Mammary epithelial cell (primary cell): ENCODE measurements at regions of chr11 and their contacts with region 1.

Region 1: DNA sequence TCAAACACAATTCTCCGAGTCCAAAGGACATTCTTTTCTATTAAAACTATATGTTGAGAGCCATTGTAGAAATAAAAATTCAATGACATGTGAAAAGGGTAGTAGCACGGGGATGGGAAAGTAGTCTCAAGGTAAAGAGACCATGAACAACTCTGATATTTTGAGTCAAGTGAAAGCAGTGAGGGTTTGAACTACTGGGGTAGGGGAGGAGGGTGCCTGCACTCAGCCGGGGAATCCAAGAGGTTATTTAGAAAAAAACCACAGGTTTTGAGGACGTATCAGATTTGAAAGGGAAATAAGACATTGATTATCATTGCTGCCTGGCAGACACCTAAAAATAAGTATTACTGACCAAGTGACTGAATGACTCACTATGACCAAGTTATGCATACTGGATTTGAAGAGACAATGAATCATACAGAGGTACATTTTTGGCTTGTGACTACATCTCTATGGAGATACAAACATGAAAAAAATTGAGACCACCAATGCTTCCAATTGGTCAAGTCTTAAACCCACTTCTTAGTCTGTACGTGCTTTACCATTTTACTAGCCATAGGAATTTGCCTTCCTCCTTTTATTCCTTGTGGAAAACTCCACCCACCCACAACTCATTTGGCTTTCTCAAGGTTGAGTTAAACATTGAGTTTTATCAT is 2.2 kb upstream of the OR52H1 start:
- DNase-seq: peak; percentile 68
- H3K4me3 ChIP-seq: no peak overlapping the region
- H3K27ac ChIP-seq: peak overlapping the region; percentile 33
- H3K4me1 ChIP-seq: peaks cover 10% of the 10 kb centered on the region
- H3K27me3 ChIP-seq: no peaks in the 10 kb centered on the region
- CTCF ChIP-seq: no peak

Region 2: DNA sequence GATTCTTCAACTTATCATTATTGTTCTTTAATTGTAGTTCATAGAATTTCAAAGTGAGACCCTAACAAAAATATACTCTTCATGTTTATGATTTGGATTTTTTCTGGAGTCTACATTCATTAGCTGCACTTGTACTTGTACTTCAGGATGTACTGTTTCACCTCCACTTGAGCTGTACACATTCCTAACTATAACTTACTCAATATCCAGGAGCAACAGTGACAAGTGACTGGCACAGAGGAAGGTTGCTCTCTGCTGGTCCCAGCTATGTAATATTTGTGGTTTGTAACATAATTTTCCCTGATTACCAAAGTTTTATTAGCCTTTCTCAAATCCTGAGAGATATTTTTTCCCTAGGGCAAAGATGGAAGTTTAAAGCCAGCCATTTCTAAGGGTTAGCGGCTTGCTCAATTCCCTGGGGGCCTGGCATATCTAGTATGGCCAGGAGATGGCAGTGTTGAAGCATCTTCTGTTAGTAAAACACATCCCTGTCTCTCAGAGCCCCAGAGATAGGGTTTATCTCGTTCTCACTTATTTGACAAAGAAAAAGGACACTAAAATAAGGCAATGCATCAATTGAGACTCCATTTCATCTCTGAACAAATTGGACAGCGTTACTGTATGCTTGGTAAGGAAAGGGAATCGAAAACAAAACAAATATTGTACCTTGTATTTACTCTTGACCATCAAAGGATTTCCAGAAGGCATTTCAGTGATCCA is 426.6 kb before region 1 on chr11:
- CTCF ChIA-PET with region 1: no interaction called
- dilution Hi-C with region 1: no loop called
- in situ Hi-C with region 1: no loop called
- intact Hi-C with region 1: loop called (anchors 5 kb)
- DNase-seq: peak; percentile 51
- H3K4me3 ChIP-seq: no peak overlapping the region
- H3K27ac ChIP-seq: no peak overlapping the region
- H3K4me1 ChIP-seq: no peaks in the 10 kb centered on the region
- H3K27me3 ChIP-seq: no peaks in the 10 kb centered on the region
- CTCF ChIP-seq: peak; percentile 76 to 88

Region 3: DNA sequence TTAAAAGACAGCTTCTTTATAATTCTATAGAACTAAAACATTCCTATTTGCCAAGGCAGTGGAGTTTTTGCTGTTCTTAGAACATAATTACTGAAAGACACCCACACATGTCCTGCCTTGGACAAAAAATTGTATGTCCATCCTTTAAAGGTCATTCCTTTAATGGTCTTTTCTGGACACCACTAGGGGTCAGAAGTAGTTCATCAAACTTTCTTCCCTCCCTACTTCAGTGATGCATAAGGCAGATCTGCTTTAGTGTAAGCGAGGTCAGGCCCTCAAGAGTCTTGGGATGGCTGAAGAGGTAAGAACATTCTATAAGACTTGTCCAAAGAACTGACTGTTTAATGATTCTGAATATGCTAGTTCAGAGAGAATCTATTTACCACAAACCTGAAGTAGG is 345.8 kb before region 1 on chr11:
- CTCF ChIA-PET with region 1: no interaction called
- dilution Hi-C with region 1: no loop called
- in situ Hi-C with region 1: no loop called
- intact Hi-C with region 1: loop called (anchors 10 kb)
- DNase-seq: peak; percentile 58
- H3K4me3 ChIP-seq: no peak overlapping the region
- H3K27ac ChIP-seq: no peak overlapping the region
- H3K4me1 ChIP-seq: no peaks in the 10 kb centered on the region
- H3K27me3 ChIP-seq: no peaks in the 10 kb centered on the region
- CTCF ChIP-seq: peak; percentile 66 to 67

Region 4: GRCh38 chr11:5476184-5476819 is 74.3 kb before region 1 on chr11:
- CTCF ChIA-PET with region 1: no interaction called
- dilution Hi-C with region 1: no loop called
- in situ Hi-C with region 1: no loop called
- intact Hi-C with region 1: loop called (anchors 1 kb)
- DNase-seq: peak; percentile 27
- H3K4me3 ChIP-seq: no peak overlapping the region
- H3K27ac ChIP-seq: no peak overlapping the region
- H3K4me1 ChIP-seq: no peaks in the 10 kb centered on the region
- H3K27me3 ChIP-seq: peaks cover 3% of the 10 kb centered on the region
- CTCF ChIP-seq: peak; percentile 86 to 89

Region 5: GRCh38 chr11:5499671-5500070 is 50.9 kb before region 1 on chr11:
- CTCF ChIA-PET with region 1: no interaction called
- dilution Hi-C with region 1: no loop called
- in situ Hi-C with region 1: no loop called
- intact Hi-C with region 1: no loop called
- DNase-seq: no peak
- H3K4me3 ChIP-seq: no peak overlapping the region
- H3K27ac ChIP-seq: no peak overlapping the region
- H3K4me1 ChIP-seq: no peaks in the 10 kb centered on the region
- H3K27me3 ChIP-seq: peaks cover 2% of the 10 kb centered on the region
- CTCF ChIP-seq: no peak

Region 6: GRCh38 chr11:5600374-5600851 is 49.8 kb after region 1 on chr11:
- CTCF ChIA-PET with region 1: no interaction called
- dilution Hi-C with region 1: no loop called
- in situ Hi-C with region 1: no loop called
- intact Hi-C with region 1: loop called (anchors 5 kb)
- DNase-seq: no peak
- H3K4me3 ChIP-seq: no peak overlapping the region
- H3K27ac ChIP-seq: no peak overlapping the region
- H3K4me1 ChIP-seq: peaks cover 5% of the 10 kb centered on the region
- H3K27me3 ChIP-seq: no peaks in the 10 kb centered on the region
- CTCF ChIP-seq: peak; percentile 77 to 86